ENCODE measurements at regions of chr2 and their contacts with region 1.

Region 1: DNA sequence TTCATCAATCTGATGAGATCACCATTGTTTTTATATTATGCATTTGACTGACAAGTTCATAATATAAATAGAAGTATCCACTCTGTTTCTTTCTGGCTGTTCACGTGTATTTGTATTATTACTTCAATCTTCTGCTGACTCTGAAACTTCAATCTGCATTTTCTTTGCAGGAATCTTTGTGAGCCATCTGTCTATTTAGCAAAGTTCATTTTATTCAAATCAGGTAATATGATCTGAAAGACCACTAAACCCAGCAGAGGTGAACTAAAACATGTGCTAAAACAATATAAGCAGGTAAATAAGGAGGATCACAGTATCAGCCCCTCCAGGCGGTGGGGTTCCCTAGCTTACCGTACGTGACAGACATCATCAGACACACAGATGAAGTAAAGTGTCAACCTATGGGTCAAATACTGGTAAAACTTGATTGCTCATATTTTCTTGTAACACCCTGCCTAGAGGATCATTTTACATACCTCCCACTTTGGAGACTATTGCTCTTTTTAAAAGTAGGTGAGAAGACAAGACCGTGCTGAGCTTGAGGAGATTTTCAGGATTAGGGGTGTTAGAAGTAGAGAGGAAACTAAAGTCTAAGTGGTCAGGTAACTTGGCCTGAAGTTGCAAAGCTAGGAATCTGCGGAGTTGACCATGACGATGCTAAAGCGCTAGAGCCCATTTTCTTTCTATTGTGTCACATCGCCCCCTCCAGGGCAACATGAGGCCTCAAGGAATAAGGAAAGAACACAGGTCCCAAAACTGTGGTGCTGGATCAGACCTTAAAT is 9.0 kb downstream of the DTNB start:
- DNase-seq: no peak
- H3K4me3 ChIP-seq: no peak overlapping the region
- H3K27ac ChIP-seq: no peak overlapping the region
- H3K4me1 ChIP-seq: peaks cover 0 to 10% (median 2%) of the 10 kb centered on the region in 4 donors
- H3K27me3 ChIP-seq: no peaks in the 10 kb centered on the region
- CTCF ChIP-seq: peak; percentile 56 to 69 (median 69)
- EP300 ChIP-seq: no peak
- POLR2A ChIP-seq: no peak

Region 2: GRCh38 chr2:25362049-25362433 is 302.3 kb before region 1 on chr2:
- intact Hi-C with region 1: loop called (anchors 10 kb)
- DNase-seq: peak; percentile 99
- H3K4me3 ChIP-seq: peak overlapping the region; percentile 44 to 58 (median 50)
- H3K27ac ChIP-seq: peak overlapping the region; percentile 54 to 69 (median 60)
- H3K4me1 ChIP-seq: peaks cover 6 to 16% (median 15%) of the 10 kb centered on the region in 4 donors
- H3K27me3 ChIP-seq: peaks cover 0 to 12% (median 0%) of the 10 kb centered on the region in 4 donors
- CTCF ChIP-seq: peak in 2 of 3 experiments; percentile 97 to 99
- EP300 ChIP-seq: no peak
- POLR2A ChIP-seq: no peak

Region 3: GRCh38 chr2:25567406-25567805 is 97.0 kb before region 1 on chr2:
- intact Hi-C with region 1: no loop called
- DNase-seq: no peak
- H3K4me3 ChIP-seq: no peak overlapping the region
- H3K27ac ChIP-seq: no peak overlapping the region
- H3K4me1 ChIP-seq: no peaks in the 10 kb centered on the region
- H3K27me3 ChIP-seq: no peaks in the 10 kb centered on the region
- CTCF ChIP-seq: peak in 2 of 3 experiments; percentile 35 to 40
- EP300 ChIP-seq: no peak
- POLR2A ChIP-seq: no peak

Region 4: GRCh38 chr2:25606892-25607291 is 57.5 kb before region 1 on chr2:
- intact Hi-C with region 1: loop called (anchors 5 kb)
- DNase-seq: no peak
- H3K4me3 ChIP-seq: no peak overlapping the region
- H3K27ac ChIP-seq: no peak overlapping the region
- H3K4me1 ChIP-seq: no peaks in the 10 kb centered on the region
- H3K27me3 ChIP-seq: no peaks in the 10 kb centered on the region
- CTCF ChIP-seq: peak; percentile 50 to 60 (median 56)
- EP300 ChIP-seq: no peak
- POLR2A ChIP-seq: no peak

Region 5: DNA sequence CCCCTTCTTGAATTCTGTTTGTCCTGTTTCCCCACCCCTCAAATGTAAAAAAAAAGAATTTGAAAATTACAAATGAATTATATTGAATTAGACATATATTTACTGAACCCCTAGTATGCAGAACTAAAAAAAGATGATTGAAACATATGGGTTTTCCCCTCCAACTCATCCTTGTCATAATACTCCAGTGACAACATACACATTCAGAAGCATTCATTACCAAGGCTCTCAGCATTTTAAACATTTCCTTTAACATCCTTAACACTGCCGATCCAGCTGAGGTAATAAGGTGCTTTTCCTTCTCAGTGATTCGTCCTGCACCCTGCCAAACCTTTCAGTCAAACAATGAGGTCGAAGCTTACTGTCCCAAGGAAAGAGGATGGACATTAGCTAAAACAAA is 62.1 kb after region 1 on chr2:
- intact Hi-C with region 1: no loop called
- DNase-seq: no peak
- H3K4me3 ChIP-seq: no peak overlapping the region
- H3K27ac ChIP-seq: no peak overlapping the region
- H3K4me1 ChIP-seq: no peaks in the 10 kb centered on the region
- H3K27me3 ChIP-seq: no peaks in the 10 kb centered on the region
- CTCF ChIP-seq: no peak
- EP300 ChIP-seq: no peak
- POLR2A ChIP-seq: no peak

Measured in esophagus muscularis mucosa (tissue), 4 donors.